ENCODE measurements at regions of chr4 and their contacts with region 1.

Region 1: DNA sequence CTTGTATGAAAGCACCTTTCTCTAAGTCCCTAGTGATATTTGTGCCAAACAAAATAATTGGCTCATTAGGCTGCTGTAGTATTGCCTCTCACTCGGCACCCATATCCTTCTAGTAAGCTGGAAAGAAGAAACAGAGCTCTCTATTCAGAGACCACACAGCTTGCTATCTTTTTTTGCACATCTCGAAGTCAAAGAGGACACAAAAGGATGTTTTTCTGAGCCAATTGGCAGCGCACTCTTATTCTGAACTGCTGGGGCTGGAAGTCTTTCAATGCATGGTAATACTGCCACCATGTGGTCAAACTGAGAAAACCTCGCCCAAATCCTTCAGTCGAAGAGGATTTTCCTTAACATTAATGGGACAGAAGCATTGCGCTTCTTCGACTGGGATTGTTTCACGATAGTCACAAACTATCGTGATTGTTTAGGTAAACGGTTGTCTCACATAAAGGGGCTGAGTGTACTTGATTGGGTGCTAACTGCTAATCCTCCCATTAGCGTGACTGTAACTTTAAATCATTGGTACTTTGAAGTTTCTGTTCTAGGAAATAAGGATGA is 572.0 kb upstream of the LCORL start:
- DNase-seq: peak in 1 of 2 donors; percentile 55
- ATAC-seq: peak in 6 of 8 donors; percentile 57 to 68 (median 61)
- H3K4me3 ChIP-seq: no peak overlapping the region
- H3K27ac ChIP-seq: no peak overlapping the region
- H3K4me1 ChIP-seq: peaks cover 0 to 6% (median 0%) of the 10 kb centered on the region in 9 donors
- H3K27me3 ChIP-seq: peaks cover 0 to 6% (median 0%) of the 10 kb centered on the region in 7 donors
- CTCF ChIP-seq: peak; percentile 75 to 91 (median 82)

Region 2: DNA sequence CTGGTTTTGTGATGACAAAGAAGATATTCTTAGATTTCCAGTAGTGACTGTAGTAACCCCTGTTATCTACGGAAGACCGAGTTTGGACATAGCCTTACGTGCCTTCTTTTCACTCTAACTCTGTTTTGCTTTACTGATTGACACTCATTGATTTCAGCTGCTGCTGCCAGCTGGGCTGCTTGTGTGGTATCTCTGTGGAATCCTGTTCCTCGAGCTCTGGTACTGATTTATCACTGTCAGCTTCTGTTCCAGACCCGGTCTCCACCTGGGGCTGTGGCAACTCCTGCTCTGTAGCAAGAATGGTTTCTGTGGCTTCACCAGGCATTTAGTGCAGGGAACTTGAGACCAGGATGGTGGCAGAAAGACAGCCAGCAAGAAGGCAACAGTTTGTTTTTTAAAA is 1041.1 kb before region 1 on chr4:
- intact Hi-C with region 1: loop called in 9 of 10 experiments (anchors 5 to 10 kb)
- DNase-seq: no peak
- ATAC-seq: no peak
- H3K4me3 ChIP-seq: no peak overlapping the region
- H3K27ac ChIP-seq: no peak overlapping the region
- H3K4me1 ChIP-seq: peaks cover 0 to 4% (median 0%) of the 10 kb centered on the region in 9 donors
- H3K27me3 ChIP-seq: peaks cover 0 to 25% (median 4%) of the 10 kb centered on the region in 7 donors
- CTCF ChIP-seq: no peak

Region 3: GRCh38 chr4:17817020-17817419 is 776.5 kb before region 1 on chr4:
- intact Hi-C with region 1: loop called in 9 of 10 experiments (anchors 1 to 10 kb)
- DNase-seq: no peak
- ATAC-seq: peak in 3 of 8 donors; percentile 50 to 73 (median 52)
- H3K4me3 ChIP-seq: no peak overlapping the region
- H3K27ac ChIP-seq: no peak overlapping the region
- H3K4me1 ChIP-seq: peaks cover 0 to 14% (median 0%) of the 10 kb centered on the region in 9 donors
- H3K27me3 ChIP-seq: no peaks in the 10 kb centered on the region
- CTCF ChIP-seq: peak; percentile 39 to 70 (median 58)

Region 4: DNA sequence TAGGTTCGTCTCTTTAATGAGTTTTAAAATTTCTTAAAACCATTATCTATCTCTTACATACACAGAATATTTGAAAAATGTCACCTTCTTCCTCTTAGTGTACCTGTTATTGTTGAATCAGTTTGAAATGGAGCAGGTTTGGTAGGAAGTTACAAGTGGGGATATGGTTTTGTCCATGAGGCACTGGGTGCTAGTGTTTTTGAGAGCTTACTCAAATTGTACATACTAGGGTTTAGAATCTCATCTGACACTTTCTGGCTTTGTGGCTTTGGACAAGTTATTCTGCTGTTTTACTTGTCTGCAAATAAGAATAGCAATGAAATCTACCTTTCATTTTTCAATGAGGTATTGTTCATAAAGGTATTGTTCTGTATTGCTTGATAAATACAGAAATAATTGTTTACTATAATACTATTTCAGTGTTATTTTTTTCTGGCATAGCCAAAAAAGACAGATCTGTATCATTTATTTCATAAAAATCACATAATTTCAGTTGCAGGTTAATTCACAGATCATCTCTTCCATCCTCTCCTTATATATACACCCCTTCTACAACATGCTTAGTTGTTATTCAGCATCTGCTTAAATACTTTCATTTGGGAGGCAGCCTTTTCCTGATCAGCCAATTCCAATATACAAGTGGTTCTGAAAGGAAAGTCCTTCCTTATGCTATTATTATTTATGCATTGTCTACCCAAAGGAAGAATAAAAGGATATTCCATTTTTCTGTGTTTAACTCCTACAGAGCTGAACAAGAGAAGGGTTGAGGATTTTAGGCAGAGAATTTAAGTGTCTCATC is 769.5 kb before region 1 on chr4:
- intact Hi-C with region 1: loop called in 8 of 10 experiments (anchors 2 to 10 kb)
- DNase-seq: no peak
- ATAC-seq: no peak
- H3K4me3 ChIP-seq: no peak overlapping the region
- H3K27ac ChIP-seq: no peak overlapping the region
- H3K4me1 ChIP-seq: no peaks in the 10 kb centered on the region
- H3K27me3 ChIP-seq: no peaks in the 10 kb centered on the region
- CTCF ChIP-seq: no peak